MCF 10A (cell line): ENCODE measurements at regions of chrX and their contacts with region 1.

Region 1: GRCh38 chrX:70433848-70434351 is 10.7 kb upstream of the DLG3 start:
- DNase-seq: peak; percentile 55
- H3K4me3 Mint-ChIP-seq: peak overlapping the region; percentile 80
- H3K27ac Mint-ChIP-seq: peak overlapping the region; percentile 78
- H3K4me1 Mint-ChIP-seq: peaks cover 10% of the 10 kb centered on the region
- H3K27me3 Mint-ChIP-seq: peaks cover 61% of the 10 kb centered on the region
- CTCF ChIP-seq: peak; percentile 44

Region 2: DNA sequence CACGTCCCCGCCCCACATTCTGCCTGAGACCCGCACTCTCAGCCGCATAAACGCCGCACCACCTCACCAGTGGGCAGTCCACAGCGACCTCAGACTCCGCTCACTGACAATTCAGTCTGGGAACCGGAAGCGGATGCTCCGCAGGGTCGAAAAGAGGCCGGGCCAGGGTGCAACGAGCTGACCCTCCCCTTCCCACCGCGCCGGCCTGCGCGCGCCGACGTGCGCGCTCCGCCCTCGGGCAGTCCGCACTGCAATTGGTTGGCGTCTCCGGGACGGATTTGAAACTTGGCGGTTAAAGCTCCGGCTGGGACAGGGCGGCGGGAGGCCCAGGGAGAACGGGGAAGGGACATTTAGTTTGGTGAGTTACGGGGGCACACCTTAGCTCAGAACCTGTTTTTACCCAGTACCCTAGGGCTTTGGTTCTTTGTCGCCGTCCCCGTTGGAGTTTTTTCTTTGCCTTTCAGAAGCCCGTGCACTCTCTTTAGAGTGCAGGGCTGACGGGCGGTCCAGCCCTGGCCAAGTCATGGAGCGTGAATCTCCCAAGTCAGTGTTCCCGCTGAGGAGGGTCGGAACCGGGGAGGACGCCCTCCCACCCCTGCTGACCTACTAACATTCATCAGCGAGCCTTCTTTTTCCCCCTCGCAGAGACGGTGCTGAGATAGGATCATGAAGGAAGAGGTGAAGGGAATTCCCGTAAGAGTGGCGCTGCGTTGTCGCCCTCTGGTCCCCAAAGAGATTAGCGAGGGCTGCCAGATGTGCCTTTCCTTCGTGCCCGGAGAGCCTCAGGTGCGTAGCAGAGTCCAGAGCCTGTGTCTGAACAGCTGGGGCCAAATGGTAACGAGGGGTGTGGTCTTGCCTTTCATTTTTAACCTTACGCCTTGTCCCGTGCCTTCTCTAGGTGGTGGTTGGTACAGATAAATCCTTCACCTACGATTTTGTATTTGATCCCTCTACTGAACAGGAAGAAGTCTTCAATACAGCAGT is 143.8 kb before region 1 on chrX and contains the starts of genes KIF4A and PDZD11:
- CTCF ChIA-PET with region 1: interaction called, 4 read pairs
- POLR2A ChIA-PET with region 1: interaction called, 7 read pairs
- intact Hi-C with region 1: loop called (anchors 5 kb)
- DNase-seq: peak; percentile 77
- H3K4me3 Mint-ChIP-seq: peak within 1 kb of the TSS; percentile 84
- H3K27ac Mint-ChIP-seq: peak within 1 kb of the TSS; percentile 53
- H3K4me1 Mint-ChIP-seq: peaks cover 6% of the 10 kb centered on the region
- H3K27me3 Mint-ChIP-seq: peaks cover 29% of the 10 kb centered on the region
- CTCF ChIP-seq: no peak
- total RNA-seq, gene KIF4A: 13.6 and 19.0 TPM in 2 replicates
- total RNA-seq, gene PDZD11: 51.9 and 57.2 TPM in 2 replicates

Region 3: GRCh38 chrX:70592091-70592490 is 158.2 kb after region 1 on chrX:
- CTCF ChIA-PET with region 1: interaction called, 3 read pairs
- POLR2A ChIA-PET with region 1: no interaction called
- intact Hi-C with region 1: loop called (anchors 5 kb)
- DNase-seq: peak; percentile 87
- H3K4me3 Mint-ChIP-seq: no peak overlapping the region
- H3K27ac Mint-ChIP-seq: no peak overlapping the region
- H3K4me1 Mint-ChIP-seq: no peaks in the 10 kb centered on the region
- H3K27me3 Mint-ChIP-seq: no peaks in the 10 kb centered on the region
- CTCF ChIP-seq: no peak

Region 4: DNA sequence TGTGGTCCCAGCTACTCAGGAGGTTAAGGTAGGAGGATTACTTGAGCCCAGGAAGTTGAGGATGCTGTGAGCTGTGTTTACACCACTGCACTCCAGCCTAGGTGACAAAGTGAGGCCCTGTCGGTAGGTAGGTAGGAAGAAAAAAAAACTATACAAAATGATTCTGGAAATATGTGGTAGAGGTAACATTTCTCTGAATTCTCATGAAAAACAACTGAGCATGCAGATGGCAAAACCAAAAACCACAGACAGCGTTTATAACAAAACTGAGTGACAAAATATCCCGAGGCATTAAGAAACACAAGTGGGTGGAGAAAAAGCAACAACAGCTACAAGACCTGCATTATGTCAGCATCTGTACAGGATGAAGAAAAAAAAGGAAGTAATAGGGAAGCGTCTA is 222.4 kb after region 1 on chrX:
- CTCF ChIA-PET with region 1: no interaction called
- POLR2A ChIA-PET with region 1: no interaction called
- intact Hi-C with region 1: no loop called
- DNase-seq: no peak
- H3K4me3 Mint-ChIP-seq: no peak overlapping the region
- H3K27ac Mint-ChIP-seq: no peak overlapping the region
- H3K4me1 Mint-ChIP-seq: no peaks in the 10 kb centered on the region
- H3K27me3 Mint-ChIP-seq: peaks cover 32% of the 10 kb centered on the region
- CTCF ChIP-seq: no peak